ENCODE measurements at regions of chr12 and their contacts with region 1.

Region 1: DNA sequence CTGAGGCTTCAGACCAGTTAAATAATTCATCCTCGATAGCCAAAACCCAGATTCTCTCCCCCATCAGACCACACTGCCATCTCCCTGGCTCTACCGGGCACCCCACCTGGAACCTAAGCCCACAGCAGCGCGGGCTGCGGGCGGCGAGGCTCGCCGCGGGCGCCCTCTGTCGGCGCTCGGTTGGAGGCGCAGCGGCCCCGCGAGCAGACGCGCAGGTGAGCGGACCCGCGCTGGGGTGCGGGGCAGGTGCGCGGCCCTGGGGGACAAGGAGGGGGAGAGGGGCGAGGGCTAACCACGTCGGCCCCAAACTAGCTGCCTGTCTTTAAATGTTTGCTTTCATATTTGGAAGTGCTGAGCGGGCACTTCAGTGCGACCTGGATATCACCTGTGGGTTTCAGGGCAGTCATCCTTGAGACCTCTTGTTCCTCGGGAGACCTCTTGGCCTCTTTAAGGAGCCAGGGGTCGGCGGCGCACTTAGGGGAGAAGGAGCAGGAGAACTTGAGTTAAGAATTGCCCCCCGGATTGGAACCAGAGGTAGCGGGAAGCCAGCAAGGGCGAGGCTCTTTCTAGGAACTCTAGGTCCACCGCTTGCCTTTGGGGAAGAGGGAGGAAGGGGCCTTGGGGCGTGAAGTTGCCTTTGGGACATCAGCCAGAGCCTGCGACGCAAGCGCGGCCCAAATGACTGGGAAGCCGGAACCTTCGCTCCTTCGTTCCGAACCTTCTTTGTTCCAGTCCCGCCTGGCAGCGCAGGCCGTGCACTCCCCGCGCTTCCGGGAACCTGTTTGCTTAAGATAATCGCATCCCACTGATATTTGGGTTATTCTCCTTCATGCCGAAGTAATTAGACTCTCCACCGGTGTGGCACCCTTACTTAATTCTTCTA is 78.7 kb downstream of the NEDD1 start:
- DNase-seq: peak; percentile 36 to 52 (median 43)
- H3K4me3 ChIP-seq: peak overlapping the region; percentile 41 to 69
- H3K4me3 Mint-ChIP-seq: peak overlapping the region; percentile 75 to 91 (median 86)
- H3K27ac ChIP-seq: no peak overlapping the region
- H3K27ac Mint-ChIP-seq: peak overlapping the region in 5 of 7 donors; percentile 40 to 83 (median 62)
- H3K4me1 ChIP-seq: peaks cover 14% of the 10 kb centered on the region
- H3K4me1 Mint-ChIP-seq: peaks cover 0 to 7% (median 2%) of the 10 kb centered on the region in 4 donors
- H3K27me3 ChIP-seq: peaks cover 10% of the 10 kb centered on the region
- H3K27me3 Mint-ChIP-seq: peaks cover 4 to 18% of the 10 kb centered on the region in 2 donors

Region 2: DNA sequence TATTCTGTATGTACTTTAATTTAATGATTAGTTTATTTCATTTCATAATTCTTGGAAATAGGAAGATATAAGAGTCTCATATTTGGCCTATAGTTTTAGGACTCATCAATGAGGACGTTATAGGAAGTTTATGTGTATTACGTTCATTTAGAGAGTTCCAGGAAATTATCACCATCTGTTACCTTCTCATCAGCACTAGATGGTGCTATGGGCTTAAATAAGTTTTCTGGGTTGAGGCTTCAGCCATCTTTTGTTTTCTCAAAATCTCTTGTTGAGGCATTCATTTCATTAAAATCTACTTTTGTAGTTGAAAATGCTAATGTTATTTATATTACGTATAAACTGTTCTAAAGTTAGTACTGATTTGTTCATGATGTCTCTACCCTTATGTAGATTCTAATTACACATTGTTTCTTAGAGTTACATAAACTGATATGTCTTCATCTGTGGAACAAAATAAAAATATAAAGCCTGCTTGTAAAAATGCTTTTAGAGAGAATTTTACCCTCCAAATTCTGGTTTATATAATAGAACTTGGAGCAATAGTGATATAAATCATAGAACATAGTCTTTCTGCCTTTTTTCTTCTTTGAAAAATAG is 407.1 kb before region 1 on chr12:
- CTCF ChIA-PET with region 1: interaction called, 5 read pairs
- POLR2A ChIA-PET with region 1: no interaction called
- intact Hi-C with region 1: loop called (anchors 1 kb)
- DNase-seq: peak; percentile 31 to 64 (median 55)
- H3K4me3 ChIP-seq: no peak overlapping the region
- H3K4me3 Mint-ChIP-seq: no peak overlapping the region
- H3K27ac ChIP-seq: no peak overlapping the region
- H3K27ac Mint-ChIP-seq: peak overlapping the region in 1 of 7 donors; percentile 43
- H3K4me1 ChIP-seq: no peaks in the 10 kb centered on the region
- H3K4me1 Mint-ChIP-seq: peaks cover 0 to 4% (median 0%) of the 10 kb centered on the region in 4 donors
- H3K27me3 ChIP-seq: no peaks in the 10 kb centered on the region
- H3K27me3 Mint-ChIP-seq: peaks cover 0 to 2% of the 10 kb centered on the region in 2 donors

Region 3: DNA sequence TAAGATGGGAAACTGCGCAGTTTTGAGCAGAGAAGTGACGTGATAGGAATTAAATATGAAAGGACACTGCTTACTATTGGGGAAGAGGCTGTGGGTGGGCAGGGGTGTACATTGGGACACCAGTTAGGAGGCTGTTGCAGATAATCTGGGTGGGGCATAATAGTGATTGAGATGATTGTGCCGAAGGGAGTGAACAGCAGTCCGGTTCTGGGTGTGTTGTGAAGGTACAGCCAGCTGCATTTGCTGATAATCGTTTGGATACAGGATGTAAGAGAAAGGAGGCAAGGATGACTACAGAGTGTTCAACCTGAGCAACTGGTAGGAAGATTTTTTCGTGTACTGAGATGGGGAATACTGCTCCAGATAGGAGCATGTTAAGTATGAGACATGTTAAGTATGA is 283.9 kb before region 1 on chr12:
- CTCF ChIA-PET with region 1: no interaction called
- POLR2A ChIA-PET with region 1: no interaction called
- intact Hi-C with region 1: loop called (anchors 10 kb)
- DNase-seq: no peak
- H3K4me3 ChIP-seq: no peak overlapping the region
- H3K4me3 Mint-ChIP-seq: no peak overlapping the region
- H3K27ac ChIP-seq: no peak overlapping the region
- H3K27ac Mint-ChIP-seq: no peak overlapping the region
- H3K4me1 ChIP-seq: no peaks in the 10 kb centered on the region
- H3K4me1 Mint-ChIP-seq: peaks cover 0 to 4% (median 0%) of the 10 kb centered on the region in 4 donors
- H3K27me3 ChIP-seq: no peaks in the 10 kb centered on the region
- H3K27me3 Mint-ChIP-seq: peaks cover 12 to 13% of the 10 kb centered on the region in 2 donors

Region 4: DNA sequence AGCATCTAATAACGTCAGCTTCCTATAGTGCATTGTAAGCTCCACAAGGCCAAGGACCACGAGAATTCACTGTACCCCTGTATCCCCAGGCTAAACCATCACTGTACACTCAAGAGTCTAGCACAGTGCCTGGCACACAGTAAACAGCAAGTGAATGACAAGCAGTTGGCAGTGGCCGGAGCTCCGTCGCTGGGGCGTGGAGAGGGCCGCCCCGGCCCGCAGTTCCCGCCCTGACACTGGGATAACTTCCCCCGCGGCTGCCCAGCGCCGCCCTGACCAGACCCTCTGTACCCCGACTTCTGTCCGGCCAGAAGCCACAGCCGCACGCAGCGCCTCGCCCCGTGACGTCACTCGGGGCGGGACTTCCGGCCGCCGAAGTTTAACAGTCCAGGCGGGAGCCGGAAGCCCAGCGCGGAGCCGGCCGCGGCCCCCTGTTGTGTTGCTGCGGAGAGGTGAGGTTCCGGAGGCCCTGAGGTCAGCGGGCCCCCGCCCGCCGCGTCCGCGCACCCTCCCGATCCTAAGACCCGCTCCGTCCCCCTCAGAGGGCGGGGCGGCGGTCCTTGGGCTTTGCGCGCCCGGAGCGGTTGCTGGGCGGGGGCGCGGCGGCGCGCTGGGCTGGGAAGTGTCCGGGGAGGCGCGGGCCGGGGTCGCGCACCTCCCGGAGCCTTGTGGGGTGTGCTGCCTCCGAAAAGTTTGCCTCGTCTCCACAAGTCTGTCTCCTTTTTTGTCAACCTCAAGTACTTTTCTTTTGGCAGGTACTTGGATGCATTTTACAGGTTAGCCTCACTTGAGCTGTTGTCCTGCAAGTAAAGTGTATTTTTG is 78.7 kb before region 1 on chr12 and contains the start of gene NEDD1:
- CTCF ChIA-PET with region 1: interaction called, 3 read pairs
- POLR2A ChIA-PET with region 1: no interaction called
- intact Hi-C with region 1: loop called (anchors 5 kb)
- DNase-seq: peak; percentile 81 to 86 (median 82)
- H3K4me3 ChIP-seq: peak within 1 kb of the TSS; percentile 80 to 97
- H3K4me3 Mint-ChIP-seq: peak within 1 kb of the TSS; percentile 93 to 98 (median 96)
- H3K27ac ChIP-seq: peak within 1 kb of the TSS; percentile 96
- H3K27ac Mint-ChIP-seq: peak within 1 kb of the TSS; percentile 94 to 99 (median 99)
- H3K4me1 ChIP-seq: peaks cover 46% of the 10 kb centered on the region
- H3K4me1 Mint-ChIP-seq: peaks cover 37 to 55% (median 44%) of the 10 kb centered on the region in 4 donors
- H3K27me3 ChIP-seq: no peaks in the 10 kb centered on the region
- H3K27me3 Mint-ChIP-seq: peaks cover 0 to 2% of the 10 kb centered on the region in 2 donors
- total RNA-seq, gene NEDD1: 24.6 to 27.9 TPM

Region 5: GRCh38 chr12:97308576-97309198 is 323.0 kb after region 1 on chr12:
- CTCF ChIA-PET with region 1: no interaction called
- POLR2A ChIA-PET with region 1: no interaction called
- intact Hi-C with region 1: loop called (anchors 1 kb)
- DNase-seq: peak in 4 of 5 donors; percentile 42 to 55 (median 49)
- H3K4me3 ChIP-seq: no peak overlapping the region
- H3K4me3 Mint-ChIP-seq: no peak overlapping the region
- H3K27ac ChIP-seq: no peak overlapping the region
- H3K27ac Mint-ChIP-seq: no peak overlapping the region
- H3K4me1 ChIP-seq: no peaks in the 10 kb centered on the region
- H3K4me1 Mint-ChIP-seq: peaks cover 0 to 3% (median under 1%) of the 10 kb centered on the region in 4 donors
- H3K27me3 ChIP-seq: no peaks in the 10 kb centered on the region
- H3K27me3 Mint-ChIP-seq: peaks cover 1 to 12% of the 10 kb centered on the region in 2 donors

Measured in CD4-positive, alpha-beta memory T cell (primary cell).